H1 (cell line): ENCODE measurements at regions of chr1 and their contacts with region 1.

Region 1: DNA sequence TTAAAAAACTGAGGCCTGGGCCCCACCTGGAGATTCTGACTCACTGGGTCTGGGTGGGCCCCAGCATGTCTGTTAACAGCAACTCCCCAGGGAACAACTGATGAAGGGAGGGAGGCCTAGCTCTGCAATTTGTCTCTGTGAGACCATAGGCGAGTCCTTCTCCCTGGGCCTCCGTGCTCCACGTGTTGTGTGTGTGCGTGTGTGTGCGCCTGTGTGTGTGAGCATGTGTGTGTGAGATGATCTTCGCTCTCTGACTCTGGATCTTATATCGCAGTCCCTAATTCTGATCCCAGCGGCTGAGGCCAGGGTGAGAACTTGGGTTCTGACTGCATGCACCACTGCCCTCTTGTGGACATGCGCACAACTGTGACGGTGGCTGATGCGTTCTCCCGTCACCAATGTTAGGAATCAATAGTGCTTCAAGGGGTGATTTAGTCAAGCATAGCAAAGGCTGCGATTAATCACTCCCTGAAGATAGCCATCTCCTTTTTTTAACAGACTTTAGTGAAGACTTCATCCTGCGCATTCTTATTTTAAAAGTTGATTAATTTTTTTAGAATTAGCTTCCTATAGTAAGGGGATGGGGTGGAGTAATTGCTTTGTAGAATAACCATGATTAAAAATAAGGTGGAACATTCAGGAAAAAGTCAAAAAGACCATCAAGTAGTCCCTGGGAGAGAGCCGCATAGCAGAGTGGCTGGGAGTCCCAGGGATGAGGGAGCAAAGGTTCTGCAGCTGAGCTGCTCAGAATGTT is 62.4 kb upstream of the USP24 start:
- DNase-seq: peak; percentile 58 to 89
- H3K4me3 ChIP-seq: no peak overlapping the region
- H3K27ac ChIP-seq: no peak overlapping the region
- H3K4me1 ChIP-seq: peaks cover 0 to 10% (median 4%) of the 10 kb centered on the region in 4 experiments; a peak in 5 of 7 replicates
- H3K27me3 ChIP-seq: no peaks in the 10 kb centered on the region
- CTCF ChIP-seq: peak; percentile 84 to 96 (median 87)
- EP300 ChIP-seq: no peak
- POLR2A ChIP-seq: no peak
- RAD21 ChIP-seq: peak; percentile 89 to 90

Region 2: DNA sequence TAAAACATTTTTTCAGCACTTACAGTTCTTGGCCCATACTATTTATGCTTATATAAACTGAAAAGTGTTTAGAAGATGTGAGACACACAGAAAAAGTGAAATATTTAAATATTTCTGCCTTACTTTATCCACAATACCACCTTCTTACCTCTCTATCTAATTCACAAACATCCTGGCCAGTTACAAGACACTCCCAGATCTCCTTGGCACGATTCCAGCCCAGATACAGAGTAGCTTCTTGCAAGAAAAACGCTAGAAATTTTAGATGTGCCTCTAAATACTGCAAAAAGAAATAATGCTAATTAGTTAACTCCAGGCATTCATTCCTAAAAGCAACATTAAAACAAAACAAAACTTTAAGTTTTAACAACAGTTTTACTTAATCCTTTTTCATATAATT is 130.8 kb before region 1 on chr1:
- CTCF ChIA-PET with region 1: interaction called, 148 read pairs
- POLR2A ChIA-PET with region 1: no interaction called
- DNase-seq: no peak
- H3K4me3 ChIP-seq: no peak overlapping the region
- H3K27ac ChIP-seq: no peak overlapping the region
- H3K4me1 ChIP-seq: no peaks in the 10 kb centered on the region
- H3K27me3 ChIP-seq: no peaks in the 10 kb centered on the region
- CTCF ChIP-seq: no peak
- EP300 ChIP-seq: no peak
- POLR2A ChIP-seq: no peak
- RAD21 ChIP-seq: no peak

Region 3: DNA sequence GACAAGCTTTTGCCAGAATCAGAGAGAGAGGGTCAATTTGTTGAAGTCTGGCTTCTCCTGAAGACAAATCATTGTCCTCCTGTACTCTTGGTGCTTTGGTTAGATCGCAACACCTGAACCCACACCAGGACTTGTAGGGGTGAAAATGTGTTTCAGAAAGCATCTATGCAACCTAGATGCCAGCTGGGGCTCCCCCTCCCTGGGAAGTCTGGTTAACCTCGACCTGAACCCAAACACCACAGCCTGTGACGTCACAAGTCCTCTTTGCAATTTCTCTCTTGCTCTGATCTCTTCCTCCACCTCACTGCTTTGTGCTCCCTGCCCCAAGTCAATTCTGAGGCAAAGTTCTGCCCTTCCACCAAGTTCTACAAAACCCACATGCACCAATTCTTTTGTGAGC is 19.6 kb before region 1 on chr1:
- CTCF ChIA-PET with region 1: interaction called, 13 read pairs
- POLR2A ChIA-PET with region 1: no interaction called
- DNase-seq: no peak
- H3K4me3 ChIP-seq: no peak overlapping the region
- H3K27ac ChIP-seq: no peak overlapping the region
- H3K4me1 ChIP-seq: no peaks in the 10 kb centered on the region
- H3K27me3 ChIP-seq: no peaks in the 10 kb centered on the region
- CTCF ChIP-seq: no peak
- EP300 ChIP-seq: no peak
- POLR2A ChIP-seq: no peak
- RAD21 ChIP-seq: no peak